Ovary (tissue), 10 donors: ENCODE measurements at regions of chr12 and their contacts with region 1.

Region 1: GRCh38 chr12:89352492-89353187 is at the start of gene DUSP6:
- DNase-seq: peak; percentile 66 to 81 (median 76)
- H3K4me3 ChIP-seq: peak within 1 kb of the TSS; percentile 71
- H3K27ac ChIP-seq: peak within 1 kb of the TSS; percentile 41 to 47
- H3K4me1 ChIP-seq: peaks cover 3% of the 10 kb centered on the region
- H3K27me3 ChIP-seq: no peaks in the 10 kb centered on the region
- CTCF ChIP-seq: no peak
- EP300 ChIP-seq: no peak
- POLR2A ChIP-seq: peak; percentile 62
- total RNA-seq, gene DUSP6: 10.8 to 34.4 (median 20.1) TPM

Region 2: GRCh38 chr12:89029961-89030360 is 322.7 kb before region 1 on chr12:
- intact Hi-C with region 1: no loop called
- DNase-seq: no peak
- H3K4me3 ChIP-seq: no peak overlapping the region
- H3K27ac ChIP-seq: no peak overlapping the region
- H3K4me1 ChIP-seq: no peaks in the 10 kb centered on the region
- H3K27me3 ChIP-seq: no peaks in the 10 kb centered on the region
- CTCF ChIP-seq: no peak
- EP300 ChIP-seq: no peak
- POLR2A ChIP-seq: no peak

Region 3: DNA sequence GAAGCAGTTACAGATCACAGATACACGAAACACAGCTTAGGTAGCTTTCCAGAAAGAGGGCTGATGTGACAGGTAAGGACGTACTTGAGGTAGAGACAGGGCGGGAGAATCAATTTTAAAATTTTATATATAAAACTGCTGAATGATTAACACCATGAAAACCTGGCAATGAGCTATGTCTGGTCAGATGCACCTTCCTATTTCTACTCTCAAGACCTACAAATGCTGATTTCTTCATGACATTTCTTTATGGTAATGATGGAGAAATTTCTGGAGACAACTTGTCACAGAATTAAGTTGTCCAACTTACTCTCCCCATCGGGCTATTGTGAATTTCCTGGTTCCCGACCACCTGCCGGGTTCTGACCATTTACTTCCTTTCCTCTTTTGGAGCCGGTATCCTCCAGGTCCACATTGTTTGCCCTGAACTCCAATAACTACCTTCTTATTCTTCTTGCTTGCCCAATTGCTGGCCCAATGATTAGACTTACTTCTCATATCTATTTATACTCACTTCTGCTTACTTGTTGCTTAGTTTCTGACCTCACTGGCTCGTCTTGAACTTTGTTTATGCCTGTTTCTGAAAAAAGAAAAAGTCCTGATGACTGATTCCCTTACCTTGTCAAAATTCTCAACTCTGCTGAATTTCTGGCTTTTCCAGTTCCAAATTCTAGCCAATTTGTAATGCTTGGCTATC is 368.8 kb after region 1 on chr12:
- intact Hi-C with region 1: loop called in 1 of 4 experiments (anchors 5 kb)
- DNase-seq: no peak
- H3K4me3 ChIP-seq: no peak overlapping the region
- H3K27ac ChIP-seq: no peak overlapping the region
- H3K4me1 ChIP-seq: no peaks in the 10 kb centered on the region
- H3K27me3 ChIP-seq: no peaks in the 10 kb centered on the region
- CTCF ChIP-seq: no peak
- EP300 ChIP-seq: no peak
- POLR2A ChIP-seq: no peak